Breast epithelium (tissue), 4 donors: ENCODE measurements at regions of chr10 and their contacts with region 1.

Region 1: GRCh38 chr10:44575601-44576380 is 190.9 kb upstream of the CXCL12 start:
- DNase-seq: no peak
- H3K4me3 ChIP-seq: no peak overlapping the region
- H3K27ac ChIP-seq: peak overlapping the region in 1 of 2 donors; percentile 70
- H3K4me1 ChIP-seq: no peaks in the 10 kb centered on the region
- H3K27me3 ChIP-seq: no peaks in the 10 kb centered on the region
- CTCF ChIP-seq: no peak
- POLR2A ChIP-seq: no peak

Region 2: DNA sequence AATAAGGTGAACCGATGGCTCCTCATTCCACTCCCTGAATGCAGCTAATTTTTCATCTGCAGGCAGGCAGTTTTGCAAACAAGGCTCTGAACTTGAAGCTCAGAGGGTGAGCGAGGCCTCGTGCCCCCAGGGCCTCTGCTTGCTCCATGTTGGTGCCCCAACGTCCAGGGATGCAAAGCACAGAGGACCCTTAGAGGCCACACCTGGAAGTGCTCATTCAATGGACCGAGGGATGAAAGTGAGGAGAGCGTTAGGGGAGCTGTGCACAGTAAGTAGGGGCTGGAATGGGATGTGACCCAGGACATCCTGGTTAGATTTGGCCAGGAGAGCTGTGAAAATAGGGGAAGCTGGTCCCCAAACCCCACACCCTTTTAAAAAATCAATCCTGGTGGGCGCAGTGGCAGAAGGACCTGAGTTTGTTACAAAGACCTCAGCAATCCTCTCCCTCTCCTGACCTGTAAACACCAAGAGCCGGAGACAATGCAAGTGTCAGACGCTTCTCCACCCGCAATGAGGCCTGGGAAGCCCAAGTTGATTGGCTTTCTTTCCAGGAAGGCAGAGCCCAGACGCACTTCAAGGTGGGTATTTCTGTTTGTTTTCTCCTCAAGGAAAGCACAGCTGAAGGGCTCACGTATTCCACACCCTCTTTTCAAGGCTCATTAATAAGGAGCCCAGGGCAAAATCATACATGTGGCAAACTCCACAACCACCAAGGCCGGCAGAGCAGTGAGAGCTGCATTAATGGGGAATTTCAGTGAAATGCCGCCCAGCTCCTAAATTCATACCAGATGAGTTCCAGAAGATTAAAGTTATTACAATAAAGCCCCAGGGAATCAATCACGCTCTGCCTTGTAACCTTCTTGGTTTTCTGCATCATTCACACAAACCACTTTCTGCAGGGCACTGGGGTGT is 176.8 kb before region 1 on chr10:
- intact Hi-C with region 1: no loop called
- DNase-seq: no peak
- H3K4me3 ChIP-seq: no peak overlapping the region
- H3K27ac ChIP-seq: no peak overlapping the region
- H3K4me1 ChIP-seq: no peaks in the 10 kb centered on the region
- H3K27me3 ChIP-seq: no peaks in the 10 kb centered on the region
- CTCF ChIP-seq: no peak
- POLR2A ChIP-seq: no peak

Region 3: DNA sequence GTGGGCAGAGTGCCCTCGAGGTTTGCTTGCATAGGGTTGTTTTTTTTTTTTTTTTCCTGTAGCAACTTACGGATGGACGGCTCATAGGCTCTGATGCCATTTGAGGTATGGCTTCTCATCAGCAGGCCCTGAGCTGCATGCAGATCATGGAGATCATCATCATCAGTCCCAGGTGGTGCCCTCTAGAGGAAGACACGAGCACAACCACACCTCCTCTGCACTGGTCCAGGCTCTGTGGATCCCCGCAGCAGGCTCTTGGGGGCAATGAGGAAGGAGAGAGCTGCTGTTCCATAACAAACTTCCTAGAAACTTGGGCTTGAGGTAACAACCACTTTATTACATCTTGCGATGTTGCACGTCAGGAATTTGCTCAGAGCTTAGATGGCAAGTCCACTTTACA is 58.2 kb before region 1 on chr10:
- intact Hi-C with region 1: loop called (anchors 2 kb)
- DNase-seq: no peak
- H3K4me3 ChIP-seq: no peak overlapping the region
- H3K27ac ChIP-seq: no peak overlapping the region
- H3K4me1 ChIP-seq: no peaks in the 10 kb centered on the region
- H3K27me3 ChIP-seq: no peaks in the 10 kb centered on the region
- CTCF ChIP-seq: no peak
- POLR2A ChIP-seq: no peak